ENCODE measurements at regions of chr2 and their contacts with region 1.

Region 1: DNA sequence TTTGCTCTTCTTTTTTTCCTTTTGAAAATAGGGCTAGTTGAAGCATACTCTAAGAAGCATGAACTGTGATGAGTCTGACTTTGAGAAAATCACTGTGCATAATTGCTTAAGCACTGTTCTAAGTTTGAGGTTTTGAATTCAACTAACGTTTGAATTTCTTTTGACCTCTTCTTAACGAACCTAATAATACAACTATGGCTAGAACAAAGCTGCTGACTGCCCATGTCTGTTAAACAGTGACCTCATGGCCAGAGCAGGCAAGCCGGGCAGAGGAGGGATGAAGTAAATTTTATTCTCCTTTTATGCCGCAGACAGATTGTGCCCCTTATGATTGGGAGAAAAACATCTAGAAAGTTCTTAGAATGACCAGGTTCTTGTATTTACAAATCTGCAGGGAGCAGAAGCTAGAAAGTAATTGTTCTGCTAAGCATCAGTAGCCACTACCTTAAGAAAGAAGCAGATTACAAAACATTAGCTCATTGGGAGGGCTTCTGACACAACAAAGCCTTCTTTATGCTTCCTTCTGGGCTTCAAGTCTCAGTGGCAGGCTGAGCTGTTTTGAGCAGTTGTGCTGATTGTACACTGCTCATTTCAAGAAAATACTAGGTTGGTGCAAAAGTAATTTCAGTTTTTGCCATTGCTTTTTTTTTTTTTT is 97.8 kb upstream of the RASGRP3 start:
- DNase-seq: peak; percentile 11
- ATAC-seq: peak; percentile 42
- H3K4me3 ChIP-seq: no peak overlapping the region
- H3K27ac ChIP-seq: 0 out of 2 replicates have a peak overlapping the region, but pooled peaks have one; percentile 7
- H3K4me1 ChIP-seq: peaks cover 8% of the 10 kb centered on the region; the same call in 1 of the 2 replicates
- H3K27me3 ChIP-seq: no peaks in the 10 kb centered on the region
- CTCF ChIP-seq: no peak

Region 2: DNA sequence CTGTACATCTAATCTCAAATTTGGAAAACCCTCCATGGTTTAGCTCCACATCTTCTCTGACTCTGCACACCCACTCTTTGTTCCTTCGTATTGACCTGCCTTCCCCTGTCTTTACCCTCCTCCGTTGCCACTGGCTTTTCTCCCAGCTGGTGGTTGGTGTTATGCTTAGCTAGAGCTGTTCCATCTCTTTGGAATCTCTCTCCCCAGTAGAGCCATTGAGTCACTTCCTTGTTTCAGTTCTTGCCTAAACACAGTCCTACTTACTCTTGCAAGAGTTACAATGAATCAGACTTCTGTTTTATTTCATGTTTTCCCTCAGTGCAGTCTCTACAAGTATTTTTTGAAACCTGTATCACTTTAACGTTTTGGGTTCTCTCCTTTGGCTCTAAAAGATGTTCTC is 168.1 kb before region 1 on chr2:
- CTCF ChIA-PET with region 1: interaction called, 14 read pairs
- POLR2A ChIA-PET with region 1: no interaction called
- intact Hi-C with region 1: no loop called
- DNase-seq: peak; percentile 89
- ATAC-seq: peak; percentile 88
- H3K4me3 ChIP-seq: no peak overlapping the region
- H3K27ac ChIP-seq: peak overlapping the region; percentile 80
- H3K4me1 ChIP-seq: peaks cover 28% of the 10 kb centered on the region
- H3K27me3 ChIP-seq: no peaks in the 10 kb centered on the region
- CTCF ChIP-seq: no peak

Region 3: GRCh38 chr2:33441235-33441810 is 62.6 kb after region 1 on chr2:
- CTCF ChIA-PET with region 1: interaction called, 21 read pairs
- POLR2A ChIA-PET with region 1: no interaction called
- intact Hi-C with region 1: no loop called
- DNase-seq: peak; percentile 68
- ATAC-seq: peak; percentile 90
- H3K4me3 ChIP-seq: no peak overlapping the region
- H3K27ac ChIP-seq: no peak overlapping the region
- H3K4me1 ChIP-seq: peaks cover 16% of the 10 kb centered on the region
- H3K27me3 ChIP-seq: no peaks in the 10 kb centered on the region
- CTCF ChIP-seq: peak; percentile 85